ENCODE measurements at regions of chr14 and their contacts with region 1.

Region 1: GRCh38 chr14:64294672-64295413 is 672 bp upstream of the ESR2 start:
- DNase-seq: peak; percentile 88
- H3K4me3 ChIP-seq: peak overlapping the region; percentile 4 to 41 (median 28)
- H3K27ac ChIP-seq: peak overlapping the region in 2 of 4 donors; percentile 20 to 49
- H3K4me1 ChIP-seq: peaks cover 0 to 19% (median 15%) of the 10 kb centered on the region in 4 donors
- H3K27me3 ChIP-seq: peaks cover 45% of the 10 kb centered on the region
- CTCF ChIP-seq: peak; percentile 67 to 84 (median 77)
- EP300 ChIP-seq: no peak
- POLR2A ChIP-seq: no peak

Region 2: GRCh38 chr14:64159588-64159987 is 135.3 kb before region 1 on chr14:
- in situ Hi-C with region 1: loop called in 1 of 4 experiments (anchors 25 kb)
- intact Hi-C with region 1: no loop called
- DNase-seq: no peak
- H3K4me3 ChIP-seq: no peak overlapping the region
- H3K27ac ChIP-seq: no peak overlapping the region
- H3K4me1 ChIP-seq: no peaks in the 10 kb centered on the region
- H3K27me3 ChIP-seq: no peaks in the 10 kb centered on the region
- CTCF ChIP-seq: no peak
- EP300 ChIP-seq: no peak
- POLR2A ChIP-seq: no peak

Region 3: DNA sequence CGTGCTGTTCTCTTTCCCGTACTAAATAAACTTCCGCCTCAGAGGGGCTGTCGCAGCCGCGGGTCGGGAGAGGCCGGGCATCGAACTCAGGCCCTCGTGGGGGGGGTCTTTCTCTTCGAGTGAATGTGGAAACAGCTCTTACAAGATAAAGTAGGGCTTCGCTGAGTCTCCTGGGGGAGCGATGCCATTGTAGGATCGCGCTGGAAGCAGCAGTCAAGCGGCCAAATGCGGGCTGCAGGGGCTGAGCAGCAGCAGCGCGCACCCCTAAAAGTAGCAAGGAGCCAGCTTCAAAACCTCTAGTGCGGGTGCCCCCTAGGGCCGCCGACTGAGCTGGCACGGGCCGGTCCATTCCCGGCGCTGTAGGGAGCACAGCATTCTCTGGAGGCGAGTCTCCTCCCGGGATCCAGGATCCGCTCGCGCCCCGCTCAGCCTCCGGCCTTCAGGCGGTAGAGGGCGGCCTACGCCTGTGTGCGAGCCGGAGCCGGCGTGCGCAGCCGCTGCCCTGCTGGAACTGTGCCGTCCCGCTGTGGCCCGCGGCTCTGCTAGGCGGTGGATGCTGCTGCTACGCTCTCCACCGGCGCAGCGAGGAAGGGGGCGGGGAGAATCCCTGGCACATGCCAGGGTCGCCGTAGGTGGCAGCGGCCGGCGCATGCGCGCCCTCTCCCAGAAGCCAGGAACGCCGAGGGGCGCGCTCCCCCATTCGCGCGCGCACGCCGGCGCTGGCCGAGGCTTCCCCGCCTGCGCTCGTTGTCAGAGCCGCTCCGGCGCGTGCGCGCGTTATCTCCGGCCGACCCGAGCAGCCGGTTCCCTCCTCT is 1117.4 kb after region 1 on chr14 and contains the start of gene FUT8:
- in situ Hi-C with region 1: no loop called
- intact Hi-C with region 1: no loop called
- DNase-seq: peak; percentile 96
- H3K4me3 ChIP-seq: peak within 1 kb of the TSS; percentile 49 to 86 (median 84)
- H3K27ac ChIP-seq: peak within 1 kb of the TSS; percentile 89 to 98 (median 94)
- H3K4me1 ChIP-seq: peaks cover 0 to 21% (median 7%) of the 10 kb centered on the region in 4 donors
- H3K27me3 ChIP-seq: no peaks in the 10 kb centered on the region
- CTCF ChIP-seq: peak; percentile 37 to 65 (median 52)
- EP300 ChIP-seq: no peak
- POLR2A ChIP-seq: peak; percentile 71
- total RNA-seq, gene FUT8: 7.9 to 27.5 (median 12.8) TPM

Measured in transverse colon (tissue), 4 donors.